ENCODE measurements at regions of chr1 and their contacts with region 1.

Region 1: DNA sequence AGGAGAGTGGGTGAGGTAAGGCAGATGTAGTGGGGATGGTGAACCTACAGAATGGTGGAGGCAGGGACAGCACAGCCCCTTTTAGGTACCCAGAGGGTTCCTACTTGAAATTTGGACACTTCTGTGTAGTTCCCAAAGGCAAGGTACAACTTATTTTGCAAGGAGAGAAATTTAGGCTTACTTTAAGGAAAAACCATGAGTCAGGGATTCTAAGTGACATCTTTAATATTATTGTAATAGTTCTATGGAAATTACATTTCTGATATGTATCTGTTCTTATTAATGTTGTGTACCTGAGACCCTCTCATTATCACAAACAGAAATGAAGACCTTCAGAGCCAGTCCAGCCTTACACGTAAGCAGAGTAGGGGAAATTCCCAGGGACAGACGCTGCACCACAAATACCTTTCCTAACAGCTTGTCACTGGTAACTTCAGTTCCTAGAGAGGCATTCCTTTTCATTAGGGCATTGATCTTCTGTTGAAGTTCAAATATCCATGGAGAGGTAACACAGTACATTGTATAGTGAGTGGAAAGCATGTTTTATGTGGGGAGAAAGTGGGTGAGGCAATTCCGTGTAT is 7.9 kb downstream of the DYRK3 start:
- DNase-seq: no peak
- ATAC-seq: no peak
- H3K4me3 ChIP-seq: no peak overlapping the region
- H3K27ac ChIP-seq: no peak overlapping the region
- H3K4me1 ChIP-seq: peaks cover 2% of the 10 kb centered on the region; the same call in 1 of the 2 replicates
- H3K27me3 ChIP-seq: no peaks in the 10 kb centered on the region
- CTCF ChIP-seq: no peak
- POLR2A ChIP-seq: no peak
- RAD21 ChIP-seq: no peak

Region 2: DNA sequence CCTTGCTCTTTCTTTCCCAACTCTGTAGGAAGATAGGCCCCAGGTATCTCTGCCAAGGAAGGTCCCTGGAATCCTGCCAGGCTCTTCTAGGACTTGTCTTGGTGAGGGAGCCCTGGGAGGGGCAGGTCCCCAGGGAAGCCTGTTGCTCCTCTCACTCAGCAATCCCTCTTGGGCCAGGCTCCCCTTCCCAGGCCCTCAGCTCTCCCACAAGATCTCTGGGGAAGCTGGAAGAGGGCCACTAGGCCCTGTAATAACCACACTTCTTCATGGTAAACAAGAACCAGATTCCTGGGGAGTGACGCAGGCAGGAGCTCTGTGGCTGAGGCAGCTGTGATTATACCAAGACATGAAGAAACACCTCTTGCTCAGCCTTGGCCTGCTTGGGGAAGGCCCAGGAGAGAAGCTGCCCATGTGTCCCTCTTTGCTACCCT is 31.6 kb after region 1 on chr1:
- CTCF ChIA-PET with region 1: no interaction called
- POLR2A ChIA-PET with region 1: interaction called, 10 read pairs
- dilution Hi-C with region 1: no loop called
- in situ Hi-C with region 1: no loop called
- intact Hi-C with region 1: no loop called
- DNase-seq: peak; percentile 100
- ATAC-seq: peak; percentile 98
- H3K4me3 ChIP-seq: no peak overlapping the region
- H3K27ac ChIP-seq: peak overlapping the region; percentile 79
- H3K4me1 ChIP-seq: peaks cover 21% of the 10 kb centered on the region
- H3K27me3 ChIP-seq: no peaks in the 10 kb centered on the region
- CTCF ChIP-seq: no peak
- POLR2A ChIP-seq: no peak
- RAD21 ChIP-seq: peak; percentile 10; the same call in 1 of the 2 replicates

Region 3: GRCh38 chr1:206744683-206745082 is 101.5 kb after region 1 on chr1:
- CTCF ChIA-PET with region 1: no interaction called
- POLR2A ChIA-PET with region 1: no interaction called
- dilution Hi-C with region 1: no loop called
- in situ Hi-C with region 1: no loop called
- intact Hi-C with region 1: no loop called
- DNase-seq: peak; percentile 21
- ATAC-seq: no peak
- H3K4me3 ChIP-seq: no peak overlapping the region
- H3K27ac ChIP-seq: no peak overlapping the region
- H3K4me1 ChIP-seq: peaks cover 3% of the 10 kb centered on the region
- H3K27me3 ChIP-seq: no peaks in the 10 kb centered on the region
- CTCF ChIP-seq: no peak
- POLR2A ChIP-seq: no peak
- RAD21 ChIP-seq: no peak

Region 4: DNA sequence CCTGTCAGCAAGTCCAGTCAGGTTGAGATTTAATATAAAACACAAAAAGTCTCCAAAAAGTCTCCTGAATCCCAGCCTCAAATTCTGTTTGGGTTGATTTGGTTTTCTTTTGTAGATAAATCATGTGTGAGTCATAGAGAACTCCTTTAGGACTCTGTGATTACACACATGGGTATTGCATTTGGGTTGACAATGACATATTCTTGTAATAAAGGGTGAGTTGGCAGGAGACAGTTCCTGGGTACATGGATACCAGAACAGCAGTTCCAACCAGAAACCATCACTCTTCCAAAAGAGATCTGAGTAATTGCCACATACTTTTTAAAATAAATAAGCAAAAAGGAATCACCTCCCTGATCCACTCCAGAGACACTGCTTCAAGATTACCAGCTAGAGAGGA is 819.8 kb after region 1 on chr1:
- CTCF ChIA-PET with region 1: no interaction called
- POLR2A ChIA-PET with region 1: no interaction called
- dilution Hi-C with region 1: no loop called
- in situ Hi-C with region 1: no loop called
- intact Hi-C with region 1: no loop called
- DNase-seq: no peak
- ATAC-seq: no peak
- H3K4me3 ChIP-seq: no peak overlapping the region
- H3K27ac ChIP-seq: no peak overlapping the region
- H3K4me1 ChIP-seq: no peaks in the 10 kb centered on the region
- H3K27me3 ChIP-seq: no peaks in the 10 kb centered on the region
- CTCF ChIP-seq: no peak
- POLR2A ChIP-seq: no peak
- RAD21 ChIP-seq: no peak